ENCODE measurements at regions of chr16 and their contacts with region 1.

Region 1: DNA sequence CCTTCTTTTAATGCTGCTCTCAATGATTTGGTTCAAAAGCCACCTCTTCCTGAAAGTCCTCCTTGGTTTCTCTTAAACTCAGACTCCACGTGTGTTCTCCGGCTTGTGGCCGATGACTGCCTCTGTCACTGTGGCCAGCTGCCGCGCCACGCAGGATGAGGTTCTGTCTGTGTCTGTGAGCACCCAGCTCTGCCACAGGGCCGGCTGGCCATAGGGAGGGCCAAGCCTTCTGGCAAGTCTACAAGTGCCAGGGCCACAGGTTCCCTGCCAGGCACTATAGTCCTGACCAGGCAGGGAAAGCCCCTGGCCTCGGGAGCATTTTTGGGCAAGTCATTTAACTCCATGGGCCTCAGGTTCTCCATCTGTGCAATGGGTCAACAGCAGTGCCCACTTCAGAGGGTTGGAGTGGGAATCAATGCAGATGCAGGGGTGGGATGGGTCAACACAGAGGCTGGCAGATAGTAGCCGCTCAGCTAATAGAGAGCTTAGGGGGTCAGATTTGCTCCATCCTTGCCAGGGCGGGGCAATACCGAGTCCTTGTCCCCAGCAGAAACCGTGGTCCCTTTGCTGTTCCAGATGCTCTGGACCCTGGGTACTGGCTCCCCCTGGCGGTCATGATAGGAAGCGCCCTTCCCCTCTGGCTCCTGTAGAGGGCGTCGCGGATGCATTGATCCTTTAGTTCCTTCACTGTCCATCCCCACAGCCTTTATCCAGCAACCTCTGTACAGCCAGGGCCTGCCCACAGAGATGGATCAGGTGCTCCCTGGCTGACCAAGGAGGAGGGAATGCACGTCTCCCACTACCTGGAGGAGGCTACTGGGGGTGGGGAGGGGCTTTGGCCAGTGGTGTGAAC is 19.3 kb upstream of the ADGRG3 start:
- DNase-seq: no peak
- H3K4me3 ChIP-seq: no peak overlapping the region
- H3K27ac ChIP-seq: no peak overlapping the region
- H3K4me1 ChIP-seq: peaks cover 42% of the 10 kb centered on the region
- H3K27me3 ChIP-seq: no peaks in the 10 kb centered on the region
- CTCF ChIP-seq: peak; percentile 94 to 99 (median 98)
- POLR2A ChIP-seq: no peak

Region 2: DNA sequence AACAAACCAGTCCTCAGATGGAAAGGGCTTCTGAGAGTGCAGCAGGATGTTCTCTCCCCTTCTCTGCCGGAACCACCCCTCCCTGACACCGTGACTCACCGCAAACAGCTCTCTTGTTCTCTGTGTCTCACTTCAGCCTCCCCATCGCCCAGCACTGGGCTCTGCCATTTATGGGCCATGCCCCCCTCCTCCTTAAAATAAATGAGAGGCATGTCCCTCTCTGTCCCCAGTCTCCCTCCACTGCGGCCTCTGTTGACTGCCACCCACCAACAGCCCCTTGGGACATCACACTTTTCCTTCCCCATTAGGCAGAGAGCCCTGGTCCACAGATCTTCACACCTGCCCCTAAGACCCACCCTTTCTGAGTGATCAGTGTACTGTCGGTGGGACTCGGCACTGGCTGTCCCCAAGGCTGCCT is 118.7 kb before region 1 on chr16:
- intact Hi-C with region 1: no loop called
- DNase-seq: no peak
- H3K4me3 ChIP-seq: no peak overlapping the region
- H3K27ac ChIP-seq: peak overlapping the region; percentile 54
- H3K4me1 ChIP-seq: peaks cover 50% of the 10 kb centered on the region
- H3K27me3 ChIP-seq: no peaks in the 10 kb centered on the region
- CTCF ChIP-seq: no peak
- POLR2A ChIP-seq: no peak

Region 3: GRCh38 chr16:57591086-57591869 is 57.5 kb before region 1 on chr16:
- intact Hi-C with region 1: loop called (anchors 5 kb)
- DNase-seq: peak; percentile 72 to 80
- H3K4me3 ChIP-seq: no peak overlapping the region
- H3K27ac ChIP-seq: no peak overlapping the region
- H3K4me1 ChIP-seq: peaks cover 10% of the 10 kb centered on the region
- H3K27me3 ChIP-seq: no peaks in the 10 kb centered on the region
- CTCF ChIP-seq: peak; percentile 69 to 85 (median 71)
- POLR2A ChIP-seq: no peak

Measured in vagina (tissue), 2 donors.